Tibial artery (tissue), 4 donors: ENCODE measurements at regions of chr1 and their contacts with region 1.

Region 1: GRCh38 chr1:90114521-90115141 is 119.7 kb downstream of the ZNF326 start:
- DNase-seq: no peak
- H3K4me3 ChIP-seq: no peak overlapping the region
- H3K27ac ChIP-seq: no peak overlapping the region
- H3K4me1 ChIP-seq: no peaks in the 10 kb centered on the region
- H3K27me3 ChIP-seq: peaks cover 0 to 3% of the 10 kb centered on the region in 2 donors
- CTCF ChIP-seq: peak; percentile 61 to 63

Region 2: DNA sequence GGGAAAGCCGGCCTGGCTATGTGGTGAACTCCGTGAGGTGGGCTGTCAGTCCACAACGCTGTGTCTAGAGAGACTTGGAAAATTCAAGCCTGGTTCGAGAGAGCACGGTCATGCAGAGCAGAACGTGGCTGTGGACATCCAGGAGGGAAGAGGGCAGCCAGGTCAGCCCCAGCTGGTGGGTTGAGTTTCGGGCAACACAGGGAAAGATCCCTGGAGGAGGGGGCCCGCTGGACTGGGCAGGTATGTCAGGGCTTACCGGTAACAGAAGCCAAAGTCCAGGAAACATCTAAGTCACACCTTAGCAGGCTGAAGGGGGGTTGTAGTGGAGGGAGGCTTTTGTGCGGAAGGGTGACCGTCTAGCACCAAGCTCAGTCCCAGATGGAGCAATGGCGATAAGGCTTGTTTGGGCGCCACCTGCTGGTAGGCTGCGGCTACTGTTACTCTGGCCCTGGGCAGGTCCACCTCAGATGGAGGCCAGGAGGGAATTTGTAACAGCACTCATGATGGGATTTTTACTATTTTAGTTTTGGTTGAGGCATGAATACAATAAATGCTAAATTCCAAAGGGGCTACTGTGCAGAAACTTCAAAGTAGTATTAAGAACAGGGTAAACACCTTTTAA is 1050.5 kb after region 1 on chr1:
- intact Hi-C with region 1: loop called (anchors 10 kb)
- DNase-seq: peak; percentile 64 to 82
- H3K4me3 ChIP-seq: no peak overlapping the region
- H3K27ac ChIP-seq: no peak overlapping the region
- H3K4me1 ChIP-seq: no peaks in the 10 kb centered on the region
- H3K27me3 ChIP-seq: no peaks in the 10 kb centered on the region
- CTCF ChIP-seq: peak; percentile 76 to 86